Mammary epithelial cell (primary cell): ENCODE measurements at regions of chr12 and their contacts with region 1.

Region 1: GRCh38 chr12:92078167-92079053 is 67.2 kb downstream of the BTG1 start:
- DNase-seq: peak; percentile 97
- H3K4me3 ChIP-seq: no peak overlapping the region
- H3K27ac ChIP-seq: peak overlapping the region; percentile 91
- H3K4me1 ChIP-seq: peaks cover 40% of the 10 kb centered on the region
- H3K27me3 ChIP-seq: no peaks in the 10 kb centered on the region
- CTCF ChIP-seq: no peak

Region 2: GRCh38 chr12:92111256-92111655 is 32.8 kb after region 1 on chr12:
- CTCF ChIA-PET with region 1: no interaction called
- dilution Hi-C with region 1: no loop called
- in situ Hi-C with region 1: no loop called
- intact Hi-C with region 1: no loop called
- DNase-seq: no peak
- H3K4me3 ChIP-seq: no peak overlapping the region
- H3K27ac ChIP-seq: no peak overlapping the region
- H3K4me1 ChIP-seq: no peaks in the 10 kb centered on the region
- H3K27me3 ChIP-seq: no peaks in the 10 kb centered on the region
- CTCF ChIP-seq: no peak

Region 3: GRCh38 chr12:92136965-92137721 is 58.7 kb after region 1 on chr12:
- CTCF ChIA-PET with region 1: no interaction called
- dilution Hi-C with region 1: loop called (anchors 5 kb)
- in situ Hi-C with region 1: no loop called
- intact Hi-C with region 1: loop called (anchors 2 kb)
- DNase-seq: peak; percentile 87
- H3K4me3 ChIP-seq: peak overlapping the region in 1 of 3 experiments; percentile 9
- H3K27ac ChIP-seq: peak overlapping the region; percentile 98
- H3K4me1 ChIP-seq: peaks cover 63% of the 10 kb centered on the region
- H3K27me3 ChIP-seq: no peaks in the 10 kb centered on the region
- CTCF ChIP-seq: no peak

Region 4: DNA sequence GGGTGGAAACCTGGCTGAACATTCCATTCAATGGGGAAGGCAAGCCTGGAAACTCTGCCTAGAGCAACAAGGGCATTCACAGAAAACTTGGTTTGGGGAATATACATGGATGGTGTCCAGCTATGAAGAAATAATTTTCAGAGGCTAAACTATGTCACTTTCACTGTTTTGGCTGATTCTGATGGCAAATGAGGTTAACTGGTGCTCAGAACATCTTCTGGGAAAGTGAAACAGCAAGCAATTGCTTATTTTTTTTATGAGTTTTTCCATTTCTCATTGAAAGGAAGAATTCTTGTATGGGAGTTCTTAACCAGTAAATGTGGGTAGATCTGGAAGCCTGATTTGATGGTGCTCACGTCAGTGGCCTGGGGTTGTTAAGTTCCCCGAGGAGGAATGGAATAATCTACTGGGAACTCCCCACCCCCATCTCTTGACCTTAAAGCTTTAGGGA is 200.0 kb after region 1 on chr12:
- CTCF ChIA-PET with region 1: no interaction called
- dilution Hi-C with region 1: no loop called
- in situ Hi-C with region 1: no loop called
- intact Hi-C with region 1: no loop called
- DNase-seq: no peak
- H3K4me3 ChIP-seq: no peak overlapping the region
- H3K27ac ChIP-seq: no peak overlapping the region
- H3K4me1 ChIP-seq: no peaks in the 10 kb centered on the region
- H3K27me3 ChIP-seq: no peaks in the 10 kb centered on the region
- CTCF ChIP-seq: no peak